Kidney (tissue), 22 donors: ENCODE measurements at regions of chr20 and their contacts with region 1.

Region 1: GRCh38 chr20:57493091-57493615 is 31.8 kb downstream of the CTCFL start:
- DNase-seq: peak in 1 of 5 donors; percentile 29
- H3K4me3 ChIP-seq: no peak overlapping the region
- H3K27ac ChIP-seq: no peak overlapping the region
- H3K4me1 ChIP-seq: no peaks in the 10 kb centered on the region
- H3K27me3 ChIP-seq: no peaks in the 10 kb centered on the region
- CTCF ChIP-seq: no peak

Region 2: GRCh38 chr20:57374931-57375651 is 118.1 kb before region 1 on chr20:
- intact Hi-C with region 1: loop called (anchors 5 kb)
- DNase-seq: peak in 1 of 5 donors; percentile 66
- H3K4me3 ChIP-seq: no peak overlapping the region
- H3K27ac ChIP-seq: no peak overlapping the region
- H3K4me1 ChIP-seq: no peaks in the 10 kb centered on the region
- H3K27me3 ChIP-seq: no peaks in the 10 kb centered on the region
- CTCF ChIP-seq: no peak

Region 3: GRCh38 chr20:57391074-57391554 is 102.0 kb before region 1 on chr20 and contains the start of gene RBM38:
- intact Hi-C with region 1: no loop called
- DNase-seq: peak; percentile 72 to 92 (median 87)
- H3K4me3 ChIP-seq: peak within 1 kb of the TSS; percentile 58 to 66 (median 59)
- H3K27ac ChIP-seq: peak within 1 kb of the TSS; percentile 14 to 16
- H3K4me1 ChIP-seq: peaks cover 0 to 28% (median 18%) of the 10 kb centered on the region in 3 donors
- H3K27me3 ChIP-seq: no peaks in the 10 kb centered on the region
- CTCF ChIP-seq: no peak
- total RNA-seq, gene RBM38: 16.8 TPM